CD8-positive, alpha-beta memory T cell (primary cell): ENCODE measurements at regions of chr4 and their contacts with region 1.

Region 1: GRCh38 chr4:6873792-6874461 is 35.7 kb upstream of the TBC1D14 start:
- DNase-seq: peak; percentile 64 to 85 (median 70)
- H3K4me3 ChIP-seq: no peak overlapping the region
- H3K4me3 Mint-ChIP-seq: no peak overlapping the region
- H3K27ac ChIP-seq: no peak overlapping the region
- H3K27ac Mint-ChIP-seq: peak overlapping the region in 4 of 8 donors; percentile 26 to 70 (median 58)
- H3K4me1 ChIP-seq: no peaks in the 10 kb centered on the region
- H3K4me1 Mint-ChIP-seq: peaks cover 0 to 6% (median 5%) of the 10 kb centered on the region in 3 donors
- H3K27me3 ChIP-seq: no peaks in the 10 kb centered on the region
- H3K27me3 Mint-ChIP-seq: peaks cover 0 to 2% of the 10 kb centered on the region in 2 donors

Region 2: GRCh38 chr4:6724421-6725111 is 149.4 kb before region 1 on chr4:
- CTCF ChIA-PET with region 1: interaction called, 174 read pairs
- POLR2A ChIA-PET with region 1: interaction called, 12 read pairs
- DNase-seq: no peak
- H3K4me3 ChIP-seq: no peak overlapping the region
- H3K4me3 Mint-ChIP-seq: no peak overlapping the region
- H3K27ac ChIP-seq: no peak overlapping the region
- H3K27ac Mint-ChIP-seq: no peak overlapping the region
- H3K4me1 ChIP-seq: peaks cover 15% of the 10 kb centered on the region
- H3K4me1 Mint-ChIP-seq: peaks cover 7 to 16% (median 8%) of the 10 kb centered on the region in 3 donors
- H3K27me3 ChIP-seq: no peaks in the 10 kb centered on the region
- H3K27me3 Mint-ChIP-seq: no peaks in the 10 kb centered on the region

Region 3: GRCh38 chr4:6808259-6808658 is 65.7 kb before region 1 on chr4:
- CTCF ChIA-PET with region 1: no interaction called
- POLR2A ChIA-PET with region 1: no interaction called
- DNase-seq: no peak
- H3K4me3 ChIP-seq: no peak overlapping the region
- H3K4me3 Mint-ChIP-seq: no peak overlapping the region
- H3K27ac ChIP-seq: no peak overlapping the region
- H3K27ac Mint-ChIP-seq: peak overlapping the region in 2 of 8 donors; percentile 21 to 64
- H3K4me1 ChIP-seq: peaks cover 4% of the 10 kb centered on the region
- H3K4me1 Mint-ChIP-seq: peaks cover 31 to 70% (median 48%) of the 10 kb centered on the region in 3 donors
- H3K27me3 ChIP-seq: no peaks in the 10 kb centered on the region
- H3K27me3 Mint-ChIP-seq: peaks cover 0 to 3% of the 10 kb centered on the region in 2 donors

Region 4: DNA sequence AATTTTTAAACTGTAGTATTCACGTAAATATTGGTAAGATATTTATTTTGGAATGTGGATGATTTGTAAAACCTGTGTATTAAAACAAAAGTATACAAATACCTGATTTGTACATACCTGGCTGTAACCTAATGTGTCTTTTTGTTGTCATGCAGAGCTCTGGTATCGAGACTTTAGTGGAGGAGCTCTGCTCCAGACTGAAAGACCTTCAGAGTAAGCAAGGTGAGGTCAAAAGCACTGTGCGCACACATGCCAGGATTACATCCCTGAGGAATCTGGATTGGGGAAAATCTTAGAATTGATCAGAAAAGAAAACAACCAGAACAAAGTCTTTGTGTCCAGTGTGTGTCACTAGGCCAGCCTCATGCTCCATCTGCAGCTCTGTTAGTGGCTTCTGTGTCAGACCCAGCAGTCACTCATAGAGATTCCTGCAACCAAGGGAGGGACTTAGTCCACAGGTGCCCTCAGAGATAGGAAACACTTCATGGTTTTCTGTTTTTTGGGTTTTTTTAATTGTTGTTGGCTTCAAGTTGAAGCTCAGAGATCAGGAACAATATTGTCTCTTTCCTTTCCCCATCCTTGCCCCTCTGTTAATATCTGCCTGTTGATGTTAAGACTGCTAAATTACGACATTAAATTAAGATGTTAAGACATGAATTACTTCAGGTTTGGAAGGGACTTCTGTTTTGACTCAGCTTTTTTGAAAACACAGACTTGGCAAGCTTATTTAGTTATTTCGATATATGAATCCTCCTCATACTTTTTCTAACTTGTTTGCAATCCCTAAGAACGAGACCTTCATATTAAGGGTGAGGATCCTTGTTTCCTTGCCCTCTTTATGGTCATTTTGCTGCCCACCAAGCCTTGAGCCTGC is 16.7 kb before region 1 on chr4:
- CTCF ChIA-PET with region 1: interaction called, 15 read pairs
- POLR2A ChIA-PET with region 1: no interaction called
- DNase-seq: no peak
- H3K4me3 ChIP-seq: no peak overlapping the region
- H3K4me3 Mint-ChIP-seq: peak overlapping the region in 1 of 7 donors; percentile 2
- H3K27ac ChIP-seq: no peak overlapping the region
- H3K27ac Mint-ChIP-seq: peak overlapping the region in 4 of 8 donors; percentile 29 to 87 (median 60)
- H3K4me1 ChIP-seq: peaks cover 3% of the 10 kb centered on the region
- H3K4me1 Mint-ChIP-seq: peaks cover 27 to 46% (median 38%) of the 10 kb centered on the region in 3 donors
- H3K27me3 ChIP-seq: no peaks in the 10 kb centered on the region
- H3K27me3 Mint-ChIP-seq: no peaks in the 10 kb centered on the region

Region 5: GRCh38 chr4:6898763-6899162 is 24.8 kb after region 1 on chr4:
- CTCF ChIA-PET with region 1: interaction called, 13 read pairs
- POLR2A ChIA-PET with region 1: no interaction called
- DNase-seq: no peak
- H3K4me3 ChIP-seq: no peak overlapping the region
- H3K4me3 Mint-ChIP-seq: peak overlapping the region; percentile 7 to 84 (median 74)
- H3K27ac ChIP-seq: no peak overlapping the region
- H3K27ac Mint-ChIP-seq: peak overlapping the region; percentile 78 to 95 (median 92)
- H3K4me1 ChIP-seq: peaks cover 31% of the 10 kb centered on the region
- H3K4me1 Mint-ChIP-seq: peaks cover 28 to 43% (median 39%) of the 10 kb centered on the region in 3 donors
- H3K27me3 ChIP-seq: no peaks in the 10 kb centered on the region
- H3K27me3 Mint-ChIP-seq: no peaks in the 10 kb centered on the region